ENCODE measurements at regions of chr1 and their contacts with region 1.

Region 1: GRCh38 chr1:157193702-157194391 is 55.7 kb upstream of the ETV3 start:
- DNase-seq: peak; percentile 90
- ATAC-seq: peak; percentile 56
- H3K4me3 Mint-ChIP-seq: no peak overlapping the region
- H3K27ac Mint-ChIP-seq: no peak overlapping the region
- H3K4me1 Mint-ChIP-seq: peaks cover 21% of the 10 kb centered on the region
- H3K27me3 Mint-ChIP-seq: peaks cover 12% of the 10 kb centered on the region
- CTCF ChIP-seq: peak; percentile 45; the same call in 1 of the 2 replicates

Region 2: DNA sequence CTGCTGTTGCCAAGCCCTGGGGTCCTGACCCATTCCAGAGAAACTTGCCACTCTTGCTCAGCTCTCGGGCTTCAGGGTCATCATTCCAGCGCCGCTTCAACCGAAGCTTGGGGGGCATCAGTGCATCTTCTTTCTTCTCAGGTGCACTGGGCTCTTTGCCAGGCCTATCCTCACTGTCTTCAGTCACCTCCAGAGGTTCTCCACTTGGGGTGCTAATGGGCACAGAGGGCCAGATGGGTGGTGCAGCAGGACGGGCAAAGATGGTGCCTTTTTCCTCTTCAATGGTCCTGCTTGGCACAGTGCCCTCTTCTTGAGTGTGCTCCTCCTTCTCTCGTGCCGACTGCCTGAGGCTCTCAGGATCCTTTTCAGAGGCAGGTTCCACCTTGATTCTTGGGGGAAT is 69.0 kb before region 1 on chr1:
- CTCF ChIA-PET with region 1: no interaction called
- POLR2A ChIA-PET with region 1: no interaction called
- DNase-seq: no peak
- ATAC-seq: no peak
- H3K4me3 Mint-ChIP-seq: no peak overlapping the region
- H3K27ac Mint-ChIP-seq: no peak overlapping the region
- H3K4me1 Mint-ChIP-seq: peaks cover 13% of the 10 kb centered on the region
- H3K27me3 Mint-ChIP-seq: no peaks in the 10 kb centered on the region
- CTCF ChIP-seq: no peak

Region 3: DNA sequence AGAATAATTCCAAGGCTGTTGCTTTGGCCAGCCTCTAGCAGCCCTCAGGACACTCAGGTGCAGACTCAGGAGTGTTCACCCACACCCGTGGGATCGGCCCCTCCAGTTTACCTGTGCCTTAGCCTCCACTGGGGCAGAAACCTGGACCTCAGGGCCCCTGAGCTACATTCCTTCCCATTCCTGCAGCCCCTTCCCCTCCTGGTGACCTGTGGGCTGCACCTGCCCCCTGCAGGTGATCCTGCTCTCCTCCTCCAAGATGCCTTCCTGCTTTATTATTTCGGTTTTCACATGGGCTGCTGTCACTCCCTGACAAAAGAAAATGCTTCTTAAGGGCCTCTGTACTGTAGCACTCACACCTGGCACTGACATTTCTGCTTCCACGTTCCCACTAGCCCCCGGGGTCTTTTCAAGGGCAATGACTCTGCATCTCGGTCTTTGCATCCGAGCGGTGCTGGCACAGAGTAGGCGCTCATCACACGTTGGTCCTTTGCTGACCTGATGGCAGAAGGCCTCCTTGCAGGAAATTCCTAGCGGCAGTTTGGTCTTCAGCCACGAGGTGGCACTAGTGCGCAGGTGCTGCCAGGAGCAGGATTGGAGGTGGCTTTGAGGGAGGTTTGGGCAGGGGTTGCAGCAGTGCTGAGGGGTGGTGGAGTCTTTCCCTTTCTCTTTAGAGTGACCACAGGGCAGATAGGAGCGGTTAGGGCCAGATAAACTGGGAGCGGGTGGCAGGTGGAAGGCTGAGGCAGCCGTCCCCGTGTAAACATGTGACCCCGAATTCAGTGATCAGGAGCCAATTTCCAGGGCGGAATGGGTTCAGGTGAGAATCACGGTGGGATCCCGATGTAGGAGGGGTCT is 30.3 kb before region 1 on chr1:
- CTCF ChIA-PET with region 1: interaction called, 11 read pairs
- POLR2A ChIA-PET with region 1: no interaction called
- DNase-seq: peak; percentile 96
- ATAC-seq: peak; percentile 81
- H3K4me3 Mint-ChIP-seq: peak overlapping the region; percentile 46
- H3K27ac Mint-ChIP-seq: peak overlapping the region; percentile 82
- H3K4me1 Mint-ChIP-seq: peaks cover 45% of the 10 kb centered on the region
- H3K27me3 Mint-ChIP-seq: no peaks in the 10 kb centered on the region; the same call in 1 of the 2 replicates
- CTCF ChIP-seq: peak; percentile 83

Region 4: DNA sequence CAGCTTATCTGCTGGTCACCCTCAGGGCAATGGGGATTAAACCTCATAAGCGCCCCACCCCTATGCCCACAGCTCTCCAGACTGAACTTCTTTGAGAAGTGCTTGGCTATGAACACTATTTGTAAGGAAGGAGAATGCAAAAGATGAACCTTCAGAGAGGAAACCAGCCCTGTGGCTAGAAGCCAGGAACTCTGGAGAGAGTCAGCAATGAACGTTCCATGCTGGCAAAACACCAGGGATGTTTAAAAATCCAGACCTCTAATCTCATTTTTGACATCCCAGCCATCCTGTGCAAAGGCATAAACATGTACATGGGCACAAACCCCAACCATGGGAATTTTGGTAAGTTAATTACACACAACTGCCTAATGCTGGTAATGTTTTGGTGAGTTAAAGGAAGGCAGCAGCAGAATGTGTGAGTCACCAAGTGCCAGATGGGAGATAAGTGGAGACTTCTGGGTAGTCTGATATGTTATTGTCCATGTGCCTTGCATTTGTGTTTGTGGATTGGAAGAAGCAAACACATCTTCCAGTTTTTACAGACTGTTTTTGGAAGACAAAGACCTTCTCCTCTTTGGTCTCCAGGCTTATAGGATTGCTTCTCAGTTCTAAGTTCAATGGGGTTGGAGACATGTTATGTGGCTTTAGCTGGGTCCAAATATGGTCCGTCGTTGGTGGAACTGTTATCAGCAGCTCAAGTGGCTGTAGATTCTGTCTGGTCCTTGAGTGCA is 118.4 kb after region 1 on chr1:
- CTCF ChIA-PET with region 1: interaction called, 13 read pairs
- POLR2A ChIA-PET with region 1: no interaction called
- DNase-seq: no peak
- ATAC-seq: no peak
- H3K4me3 Mint-ChIP-seq: no peak overlapping the region
- H3K27ac Mint-ChIP-seq: no peak overlapping the region
- H3K4me1 Mint-ChIP-seq: peaks cover 28% of the 10 kb centered on the region
- H3K27me3 Mint-ChIP-seq: peaks cover 3% of the 10 kb centered on the region
- CTCF ChIP-seq: no peak

Measured in WTC11 (cell line).